ENCODE measurements at regions of chr17 and their contacts with region 1.

Region 1: DNA sequence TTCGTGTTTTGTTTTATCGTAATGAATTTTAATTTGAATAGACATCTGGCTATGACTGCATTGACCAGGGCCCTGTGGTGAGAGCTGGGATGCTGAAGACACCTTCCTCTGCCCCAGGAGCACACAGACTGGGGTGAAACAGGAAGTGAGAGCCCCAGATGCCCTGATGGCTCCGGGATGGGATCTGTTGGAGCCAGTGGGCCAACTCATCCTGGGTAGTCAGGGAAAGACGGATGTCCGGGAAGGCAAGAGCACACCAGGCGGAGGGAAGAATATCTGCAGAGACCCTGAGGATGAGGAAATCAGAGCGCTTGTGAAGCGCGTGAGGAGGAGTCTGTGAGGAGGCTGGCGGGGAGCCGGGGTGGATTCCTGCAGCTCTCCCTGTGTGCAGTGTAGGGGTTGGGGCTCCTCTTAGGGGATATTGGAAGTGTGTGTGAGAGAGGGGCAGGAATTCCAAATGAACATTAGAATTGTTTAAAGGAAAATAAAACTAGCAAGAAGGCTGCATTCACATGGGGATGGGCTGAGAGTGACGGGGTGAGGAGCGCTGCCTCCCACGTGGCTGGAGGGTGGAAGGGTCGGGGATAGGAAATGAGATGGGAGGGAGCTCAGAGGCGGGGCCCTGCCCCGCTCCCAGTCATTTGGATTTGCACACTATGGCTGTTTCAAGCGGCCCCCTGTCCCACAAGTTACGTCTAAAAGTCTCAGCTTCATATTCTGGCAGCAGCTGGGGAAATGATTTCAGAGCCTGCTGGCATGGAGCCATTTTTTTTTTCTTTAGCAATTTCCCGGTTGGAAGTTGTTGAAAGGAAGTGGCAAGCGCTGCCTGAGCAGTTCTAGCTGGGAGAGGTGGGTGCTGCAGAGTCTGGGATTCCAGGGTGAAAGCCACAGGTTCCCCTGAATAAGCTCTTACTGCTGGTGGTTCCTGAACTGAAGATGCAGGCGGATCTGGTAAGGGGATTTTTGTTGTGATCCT is 71.2 kb upstream of the LGALS9 start:
- DNase-seq: peak; percentile 88
- ATAC-seq: peak; percentile 92

Region 2: DNA sequence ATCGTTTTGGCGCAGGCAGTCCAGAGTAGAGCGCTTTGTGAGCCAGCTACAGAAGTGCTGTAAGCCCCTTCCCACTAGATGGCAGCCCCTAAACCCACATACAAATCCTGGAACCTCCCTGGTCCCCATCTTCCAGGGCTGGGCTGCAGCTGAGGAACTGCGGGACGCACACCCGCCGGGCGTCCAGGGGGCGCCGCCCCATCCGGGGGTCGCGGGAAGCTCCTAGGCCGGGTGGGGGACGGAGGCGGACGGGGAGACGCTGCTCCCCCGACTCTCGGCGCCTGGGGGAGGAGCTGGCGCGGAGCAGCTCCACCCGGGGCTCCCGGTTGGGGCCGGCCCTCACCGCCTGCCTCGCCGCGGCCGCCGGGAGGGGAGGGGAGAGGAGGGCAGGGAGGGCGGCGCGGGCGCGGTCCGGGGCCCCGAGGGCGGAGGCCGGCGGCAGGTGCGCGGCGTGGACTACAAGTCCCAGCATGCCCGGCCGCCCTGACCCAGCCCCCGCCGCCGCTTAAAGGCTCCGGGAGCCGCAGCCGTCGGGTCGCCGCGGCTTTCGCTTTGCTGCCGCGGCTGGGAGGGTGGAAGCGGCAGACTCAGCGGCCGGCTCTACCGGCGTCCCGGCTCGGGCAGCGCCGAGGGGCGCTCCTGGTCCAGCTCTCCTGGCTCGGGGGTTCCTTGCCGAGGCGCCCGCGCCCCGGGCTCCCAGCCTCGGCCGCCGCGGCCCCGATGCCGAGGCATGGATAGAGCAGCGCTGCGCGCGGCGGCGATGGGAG is 103.7 kb before region 1 on chr17 and contains the start of gene KSR1:
- intact Hi-C with region 1: no loop called
- DNase-seq: peak; percentile 88
- ATAC-seq: peak; percentile 96 to 97
- total RNA-seq, gene KSR1: 15.5 to 23.8 TPM

Region 3: GRCh38 chr17:27494192-27495091 is 65.4 kb before region 1 on chr17:
- intact Hi-C with region 1: loop called (anchors 5 to 10 kb)
- DNase-seq: peak; percentile 85
- ATAC-seq: peak; percentile 81 to 85